Ascending aorta (tissue), 2 donors: ENCODE measurements at regions of chr1 and their contacts with region 1.

Region 1: GRCh38 chr1:114581335-114582287 is at the start of gene BCAS2:
- DNase-seq: peak; percentile 93 to 99
- H3K4me3 ChIP-seq: peak within 1 kb of the TSS; percentile 70 to 72
- H3K27ac ChIP-seq: peak within 1 kb of the TSS; percentile 75 to 87
- H3K4me1 ChIP-seq: peaks cover 0 to 24% of the 10 kb centered on the region in 2 donors
- H3K27me3 ChIP-seq: no peaks in the 10 kb centered on the region
- CTCF ChIP-seq: no peak
- total RNA-seq, gene BCAS2: 26.1 TPM

Region 2: GRCh38 chr1:114346480-114347029 is 235.1 kb before region 1 on chr1:
- intact Hi-C with region 1: loop called (anchors 1 kb)
- DNase-seq: peak; percentile 74 to 98
- H3K4me3 ChIP-seq: peak overlapping the region; percentile 69 to 78
- H3K27ac ChIP-seq: peak overlapping the region; percentile 88 to 94
- H3K4me1 ChIP-seq: peaks cover 6 to 8% of the 10 kb centered on the region in 2 donors
- H3K27me3 ChIP-seq: no peaks in the 10 kb centered on the region
- CTCF ChIP-seq: peak; percentile 100

Region 3: DNA sequence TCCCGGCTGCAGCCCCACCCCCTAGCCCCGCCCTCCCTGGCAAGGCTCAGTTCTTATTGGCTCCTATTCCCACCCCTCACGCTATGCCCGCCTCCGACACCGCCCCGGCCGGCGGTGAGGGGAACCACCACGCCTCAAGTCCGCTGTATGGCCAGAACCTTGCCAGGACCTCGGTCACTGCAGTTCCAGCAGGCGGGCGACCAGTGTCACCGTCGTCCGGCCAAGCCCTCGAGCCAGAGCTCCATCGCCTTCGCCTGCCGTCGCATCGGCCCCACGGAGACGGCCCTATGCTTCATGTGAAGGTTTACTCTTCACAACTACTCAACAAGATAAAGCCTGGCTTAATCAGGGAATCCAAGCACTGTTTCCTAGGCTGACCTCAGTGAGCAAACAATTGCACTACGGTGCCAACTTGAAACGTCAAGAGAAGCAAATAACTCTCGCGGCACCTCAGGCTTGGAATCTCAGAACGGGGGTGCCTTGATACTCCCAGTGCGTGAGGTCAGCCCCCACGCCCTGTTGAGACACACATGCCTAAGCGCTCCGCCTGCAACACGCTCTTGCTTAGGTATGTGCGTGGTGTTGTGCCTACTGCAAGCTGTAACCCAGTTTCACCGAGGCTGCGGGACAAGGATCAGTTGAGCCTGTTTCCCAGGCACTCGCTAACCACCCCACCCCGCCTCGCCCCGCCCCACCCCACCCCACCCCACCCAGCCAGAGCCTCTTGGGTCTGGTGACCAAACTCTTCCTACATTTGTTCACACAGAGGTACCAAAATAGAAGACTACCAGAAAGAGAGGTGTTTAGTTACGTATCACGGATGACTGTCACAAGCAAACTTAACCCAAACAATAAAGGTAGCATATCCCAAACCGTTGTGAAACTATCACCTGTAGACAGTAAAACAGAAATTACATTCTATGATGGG is 88.7 kb after region 1 on chr1:
- intact Hi-C with region 1: loop called (anchors 1 kb)
- DNase-seq: peak; percentile 74 to 96
- H3K4me3 ChIP-seq: peak overlapping the region; percentile 77 to 94
- H3K27ac ChIP-seq: peak overlapping the region; percentile 54 to 82
- H3K4me1 ChIP-seq: no peaks in the 10 kb centered on the region
- H3K27me3 ChIP-seq: no peaks in the 10 kb centered on the region
- CTCF ChIP-seq: peak in 2 of 3 experiments; percentile 20 to 37

Region 4: GRCh38 chr1:114757455-114758250 is 176.0 kb after region 1 on chr1 and contains the start of gene CSDE1:
- intact Hi-C with region 1: loop called (anchors 1 kb)
- DNase-seq: peak; percentile 90 to 98
- H3K4me3 ChIP-seq: peak within 1 kb of the TSS; percentile 81 to 89
- H3K27ac ChIP-seq: peak within 1 kb of the TSS; percentile 99
- H3K4me1 ChIP-seq: peaks cover 0 to 29% of the 10 kb centered on the region in 2 donors
- H3K27me3 ChIP-seq: no peaks in the 10 kb centered on the region
- CTCF ChIP-seq: peak in 2 of 3 experiments; percentile 20 to 27
- total RNA-seq, gene CSDE1: 290 TPM

Region 5: DNA sequence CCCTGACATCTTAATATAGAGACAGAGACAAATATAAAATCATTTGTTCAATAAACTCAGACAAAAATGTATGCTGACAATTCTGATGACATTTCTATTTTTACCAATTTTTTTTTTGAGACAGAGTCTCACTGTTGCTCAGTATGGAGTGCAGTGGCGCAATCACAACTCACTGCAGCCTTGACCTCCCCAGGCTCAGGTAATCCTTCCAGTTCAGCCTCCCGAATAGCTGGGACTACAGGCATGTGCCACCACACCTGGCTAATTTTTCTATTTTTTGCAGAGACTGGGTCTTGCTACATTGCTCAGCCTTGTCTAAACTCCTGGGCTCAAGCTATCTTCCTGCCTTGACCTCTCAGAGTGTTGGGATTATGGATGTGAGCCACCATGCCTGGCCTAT is 212.4 kb after region 1 on chr1:
- intact Hi-C with region 1: no loop called
- DNase-seq: no peak
- H3K4me3 ChIP-seq: no peak overlapping the region
- H3K27ac ChIP-seq: no peak overlapping the region
- H3K4me1 ChIP-seq: no peaks in the 10 kb centered on the region
- H3K27me3 ChIP-seq: no peaks in the 10 kb centered on the region
- CTCF ChIP-seq: no peak

Region 6: DNA sequence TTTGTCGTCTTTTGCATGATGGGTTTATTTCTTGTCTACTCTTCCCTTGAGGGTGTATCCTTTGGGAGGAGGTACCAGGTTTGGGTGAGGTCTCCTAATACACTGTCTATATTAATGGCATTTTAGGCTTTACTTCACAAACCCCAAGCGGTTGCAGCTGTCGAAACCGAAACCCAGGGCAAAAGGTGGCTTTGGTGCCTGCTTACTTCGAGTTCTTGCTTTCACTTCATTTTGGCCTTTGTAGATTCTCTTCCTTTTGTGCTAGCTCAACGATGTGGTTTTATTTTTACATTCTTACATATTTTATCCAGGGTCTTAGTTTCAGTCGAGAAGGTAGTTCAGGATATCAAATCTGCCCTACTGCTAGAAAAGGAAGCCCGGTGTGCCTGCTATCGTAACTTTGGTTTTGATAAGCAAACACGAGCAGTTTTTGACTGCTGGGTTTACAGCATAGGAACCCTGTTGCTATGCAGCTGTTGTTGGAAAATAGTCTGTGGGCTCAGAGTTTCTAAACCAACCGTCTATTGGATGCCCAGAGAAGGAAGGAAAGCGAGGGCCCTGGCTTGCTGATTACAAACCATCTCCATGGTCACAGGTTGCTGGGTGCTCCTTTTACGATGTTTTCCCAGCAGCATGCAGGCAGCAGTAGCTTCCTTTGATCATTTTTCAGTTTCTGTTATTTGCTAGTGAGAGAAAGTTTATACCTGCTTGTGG is 517.5 kb after region 1 on chr1:
- intact Hi-C with region 1: loop called (anchors 10 kb)
- DNase-seq: peak in 1 of 2 donors; percentile 81
- H3K4me3 ChIP-seq: peak overlapping the region; percentile 32 to 61
- H3K27ac ChIP-seq: peak overlapping the region; percentile 82
- H3K4me1 ChIP-seq: peaks cover 0 to 3% of the 10 kb centered on the region in 2 donors
- H3K27me3 ChIP-seq: no peaks in the 10 kb centered on the region
- CTCF ChIP-seq: no peak